Activated naive CD4-positive, alpha-beta T cell treated with anti-CD3 and anti-CD28 coated beads for 36 hours (primary cell): ENCODE measurements at regions of chr5 and their contacts with region 1.

Region 1: DNA sequence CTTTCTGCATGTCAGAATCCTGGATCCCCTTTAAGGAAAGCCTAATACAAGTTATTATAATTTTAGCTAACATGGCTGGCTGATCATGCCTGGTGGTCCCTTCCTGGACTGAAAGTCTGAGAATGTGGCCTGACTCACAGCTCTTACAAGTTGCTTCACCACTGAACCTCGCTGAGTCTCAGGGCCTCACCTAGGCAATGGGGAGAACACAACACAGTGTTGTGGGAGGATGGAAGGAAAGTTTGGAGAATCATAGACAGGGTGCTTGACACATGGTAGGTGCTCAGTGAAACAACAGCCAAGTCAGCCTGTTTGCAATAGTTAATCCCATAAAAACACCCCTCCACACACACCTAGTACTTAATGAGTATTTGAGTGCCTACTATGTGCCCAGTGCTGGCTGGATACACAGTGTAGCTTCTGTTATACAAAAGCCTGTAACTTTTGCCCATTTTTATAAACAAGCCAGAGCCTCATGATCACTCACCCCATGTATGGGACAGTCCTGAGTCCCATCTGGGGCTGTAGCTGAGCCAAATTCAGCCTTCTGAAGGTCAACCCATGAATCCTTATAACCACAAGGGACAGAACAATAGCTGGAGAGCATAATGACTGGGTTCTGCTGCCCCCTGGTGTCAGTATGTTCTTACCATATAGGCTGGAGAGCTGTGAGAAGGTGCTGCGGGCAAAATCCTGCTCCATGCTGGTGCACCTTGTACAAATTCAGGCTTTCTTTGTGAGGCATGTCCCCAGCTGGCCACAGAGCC is 3.9 kb downstream of the ACSL6 start:
- DNase-seq: peak; percentile 93
- H3K4me3 Mint-ChIP-seq: no peak overlapping the region
- H3K27ac Mint-ChIP-seq: no peak overlapping the region
- H3K4me1 Mint-ChIP-seq: peaks cover 17% of the 10 kb centered on the region
- H3K27me3 Mint-ChIP-seq: peaks cover 19% of the 10 kb centered on the region

Region 2: GRCh38 chr5:131423056-131423455 is 584.5 kb before region 1 on chr5:
- CTCF ChIA-PET with region 1: interaction called, 10 read pairs
- intact Hi-C with region 1: loop called (anchors 1 kb)
- DNase-seq: no peak
- H3K4me3 Mint-ChIP-seq: no peak overlapping the region
- H3K27ac Mint-ChIP-seq: peak overlapping the region; percentile 48
- H3K4me1 Mint-ChIP-seq: peaks cover 12% of the 10 kb centered on the region
- H3K27me3 Mint-ChIP-seq: no peaks in the 10 kb centered on the region

Region 3: DNA sequence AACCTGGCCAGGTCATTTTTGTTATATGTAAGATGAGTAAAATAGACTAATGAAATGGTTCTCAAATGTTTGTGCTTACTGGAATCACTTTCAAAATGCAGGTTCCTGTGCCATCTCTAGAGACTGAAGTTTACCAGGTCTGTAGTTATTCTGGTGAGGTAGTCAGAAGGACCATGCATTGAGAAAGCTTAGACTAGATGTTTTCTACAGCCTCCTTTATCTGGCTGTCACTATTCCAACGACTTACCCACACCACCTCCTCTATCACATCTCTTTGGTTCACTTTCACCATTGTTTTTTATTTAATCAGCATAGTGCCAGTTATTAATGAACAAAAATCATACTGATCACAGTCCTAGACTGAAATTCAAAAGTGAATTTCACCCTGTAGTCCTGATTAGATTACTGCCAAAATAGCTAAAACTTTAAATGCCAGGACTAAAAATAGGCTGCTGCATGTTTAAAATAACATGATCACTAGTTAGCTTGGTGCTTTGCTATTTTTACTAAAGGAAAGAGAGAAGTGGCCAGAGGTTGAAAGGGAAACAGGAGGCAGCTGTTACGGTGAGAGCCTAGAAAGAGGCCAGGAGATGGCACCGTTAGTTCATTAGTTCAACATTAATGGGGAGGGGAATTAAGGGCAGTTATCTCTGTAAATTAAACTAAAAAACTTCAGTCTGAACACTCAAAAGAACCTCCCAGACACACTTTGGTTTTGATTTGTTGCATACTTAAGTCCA is 196.9 kb before region 1 on chr5:
- CTCF ChIA-PET with region 1: interaction called, 53 read pairs
- intact Hi-C with region 1: loop called (anchors 1 kb)
- DNase-seq: peak; percentile 31
- H3K4me3 Mint-ChIP-seq: no peak overlapping the region
- H3K27ac Mint-ChIP-seq: no peak overlapping the region
- H3K4me1 Mint-ChIP-seq: no peaks in the 10 kb centered on the region
- H3K27me3 Mint-ChIP-seq: no peaks in the 10 kb centered on the region

Region 4: DNA sequence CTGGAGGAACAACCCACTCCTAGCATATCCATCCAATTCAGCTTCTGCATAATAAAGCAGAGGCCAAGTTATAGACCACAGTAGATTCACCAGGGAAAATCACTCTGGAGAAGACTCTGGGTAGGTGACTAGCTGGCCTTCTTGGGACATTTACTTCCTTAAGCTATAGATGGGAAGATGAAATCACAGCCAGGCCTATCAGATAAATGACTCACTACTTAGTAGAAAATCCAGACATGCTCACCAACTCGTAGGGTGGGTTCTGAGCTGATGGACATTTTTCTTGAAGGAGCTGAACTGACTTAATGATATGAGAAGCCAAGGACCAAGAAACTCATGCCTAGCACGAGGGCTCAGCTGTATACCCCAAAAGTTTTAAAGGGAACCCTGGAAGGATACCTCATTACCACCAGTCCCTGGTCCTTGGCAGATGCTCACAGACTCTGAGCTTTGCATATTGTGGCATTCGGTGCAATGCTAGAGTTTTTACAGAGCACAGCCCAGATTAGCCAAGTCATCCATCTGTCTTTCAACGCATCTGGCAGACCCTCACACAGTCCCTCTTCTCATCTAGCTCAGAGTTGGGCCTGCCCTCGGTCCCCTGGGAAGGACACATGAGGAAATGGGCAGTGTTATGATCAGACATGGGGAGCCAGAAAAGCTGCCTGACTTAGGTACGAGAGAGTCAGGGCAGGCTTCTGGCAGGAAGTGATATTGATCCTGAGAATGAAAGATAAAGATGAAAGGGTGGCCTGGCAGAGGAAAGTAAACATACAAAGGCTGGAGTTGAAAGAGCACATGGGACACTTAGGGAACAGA is 11.2 kb before region 1 on chr5:
- CTCF ChIA-PET with region 1: interaction called, 18 read pairs
- intact Hi-C with region 1: no loop called
- DNase-seq: no peak
- H3K4me3 Mint-ChIP-seq: no peak overlapping the region
- H3K27ac Mint-ChIP-seq: no peak overlapping the region
- H3K4me1 Mint-ChIP-seq: peaks cover 36% of the 10 kb centered on the region
- H3K27me3 Mint-ChIP-seq: no peaks in the 10 kb centered on the region

Region 5: DNA sequence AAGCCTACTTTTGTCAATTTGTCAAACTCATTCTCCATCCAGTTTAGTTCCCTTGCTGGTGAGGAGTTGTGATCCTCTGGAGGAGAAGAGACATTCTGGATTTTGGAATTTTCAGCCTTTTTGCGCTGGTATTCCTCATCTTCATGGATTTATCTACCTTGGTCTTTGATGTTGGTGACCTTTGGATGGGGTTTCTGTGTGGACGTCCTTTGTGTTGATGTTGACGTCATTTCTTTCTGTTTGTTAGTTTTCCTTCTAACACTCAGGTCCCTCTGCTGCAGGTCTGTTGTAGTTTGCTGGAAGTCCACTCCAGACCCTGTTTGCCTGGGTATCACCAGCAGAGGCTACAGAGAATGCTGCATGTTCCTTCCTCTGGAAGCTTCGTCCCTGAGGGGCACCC is 148.8 kb after region 1 on chr5:
- CTCF ChIA-PET with region 1: no interaction called
- intact Hi-C with region 1: no loop called
- DNase-seq: no peak
- H3K4me3 Mint-ChIP-seq: no peak overlapping the region
- H3K27ac Mint-ChIP-seq: no peak overlapping the region
- H3K4me1 Mint-ChIP-seq: no peaks in the 10 kb centered on the region
- H3K27me3 Mint-ChIP-seq: peaks cover 12% of the 10 kb centered on the region

Region 6: DNA sequence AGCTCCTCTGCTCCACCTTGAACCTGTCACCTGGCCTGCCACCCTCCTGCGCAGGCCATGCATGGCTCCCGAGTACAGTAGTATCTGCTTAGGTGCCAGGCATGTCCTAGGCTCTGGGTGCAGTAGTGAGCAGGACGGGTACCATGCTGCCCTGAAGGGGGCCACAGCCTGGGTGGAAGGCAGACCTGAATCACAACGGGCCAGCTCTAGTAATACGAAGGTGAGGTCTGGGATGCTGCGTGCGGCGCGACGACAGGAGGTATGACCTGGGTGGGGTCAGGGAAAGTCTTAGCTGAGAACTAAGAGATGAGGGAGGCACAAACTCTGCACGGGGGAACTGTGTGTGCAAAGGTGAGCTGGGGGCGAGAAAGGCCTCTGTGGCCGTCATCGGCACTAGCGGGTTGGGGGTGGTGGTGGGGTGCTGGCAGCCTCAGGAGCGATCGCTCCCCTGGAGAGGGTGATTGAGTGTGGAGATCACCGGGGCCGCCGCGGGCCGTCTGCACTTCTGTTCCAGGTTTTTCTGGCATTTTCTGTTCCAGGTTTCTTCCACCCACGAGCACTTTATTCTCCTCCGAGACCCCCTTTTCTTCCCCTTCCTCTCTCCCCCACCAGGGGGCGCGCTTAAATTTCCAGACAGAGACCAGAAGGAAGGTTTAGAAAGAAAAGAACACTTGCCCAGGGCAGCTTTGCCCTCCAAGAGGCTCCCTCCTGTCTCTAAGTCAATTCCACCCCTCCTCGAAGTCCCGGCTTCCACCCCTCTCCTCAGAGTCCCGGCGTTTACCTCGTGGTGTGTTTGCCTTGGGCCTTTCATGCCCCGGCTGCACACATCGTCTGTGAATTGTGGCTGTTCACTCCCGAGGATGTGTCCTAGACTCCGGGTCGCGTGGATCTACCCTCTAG is 265.0 kb after region 1 on chr5:
- CTCF ChIA-PET with region 1: no interaction called
- intact Hi-C with region 1: no loop called
- DNase-seq: peak; percentile 82
- H3K4me3 Mint-ChIP-seq: no peak overlapping the region
- H3K27ac Mint-ChIP-seq: no peak overlapping the region
- H3K4me1 Mint-ChIP-seq: peaks cover 12% of the 10 kb centered on the region
- H3K27me3 Mint-ChIP-seq: peaks cover 20% of the 10 kb centered on the region